ENCODE measurements at regions of chr14 and their contacts with region 1.

Region 1: DNA sequence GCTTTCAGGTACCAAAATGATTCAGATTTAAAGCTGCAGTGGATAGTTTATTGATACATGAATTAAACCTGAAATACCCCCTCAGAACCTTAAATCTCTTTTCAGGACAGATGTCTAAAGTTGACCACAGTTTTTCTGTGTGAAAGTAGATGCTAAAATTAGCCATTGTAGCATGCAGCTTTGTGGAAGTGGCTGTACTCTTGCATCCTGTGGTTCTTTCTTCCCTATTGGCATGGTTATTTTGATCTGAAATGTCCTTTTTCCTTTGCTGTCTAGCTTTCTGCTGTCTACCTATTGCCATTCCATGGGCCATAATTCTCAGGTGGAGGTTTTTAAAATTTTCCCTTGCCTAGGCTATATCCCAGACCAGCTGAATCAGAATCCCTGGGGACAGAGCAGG is 455.6 kb downstream of the ZFP36L1 start:
- DNase-seq: peak in 2 of 3 donors; percentile 14 to 31
- H3K4me3 ChIP-seq: no peak overlapping the region
- H3K27ac ChIP-seq: no peak overlapping the region
- H3K4me1 ChIP-seq: peaks cover 5 to 36% (median 19%) of the 10 kb centered on the region in 4 experiments
- H3K27me3 ChIP-seq: no peaks in the 10 kb centered on the region

Region 2: GRCh38 chr14:68349900-68350629 is 12.8 kb after region 1 on chr14:
- CTCF ChIA-PET with region 1: interaction called, 11 read pairs
- POLR2A ChIA-PET with region 1: no interaction called
- DNase-seq: no peak
- H3K4me3 ChIP-seq: no peak overlapping the region
- H3K27ac ChIP-seq: no peak overlapping the region
- H3K4me1 ChIP-seq: no peaks in the 10 kb centered on the region
- H3K27me3 ChIP-seq: no peaks in the 10 kb centered on the region

Measured in common myeloid progenitor, CD34-positive (primary cell).